GM12878 (cell line): ENCODE measurements at regions of chr11 and their contacts with region 1.

Region 1: DNA sequence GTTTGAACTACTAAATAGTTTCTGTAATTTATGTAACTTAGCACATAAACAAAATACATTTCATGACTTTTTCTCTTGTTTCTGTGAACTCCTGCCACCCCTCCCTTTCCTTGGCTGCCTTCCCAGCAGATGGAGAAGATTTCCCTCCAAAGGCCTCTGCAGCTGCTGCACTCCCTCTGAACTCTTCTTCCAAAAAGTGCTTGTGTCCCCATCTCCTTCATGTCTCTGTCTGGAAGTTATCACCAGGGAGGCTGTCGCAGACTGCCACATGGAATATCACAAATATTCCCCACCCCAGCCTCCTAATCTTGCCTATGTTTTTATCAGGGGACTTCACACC is 1068.3 kb downstream of the OPCML start:
- DNase-seq: no peak
- ATAC-seq: no peak
- H3K4me3 ChIP-seq: no peak overlapping the region
- H3K27ac ChIP-seq: no peak overlapping the region
- H3K4me1 ChIP-seq: no peaks in the 10 kb centered on the region
- H3K27me3 ChIP-seq: no peaks in the 10 kb centered on the region
- CTCF ChIP-seq: no peak
- EP300 ChIP-seq: no peak
- POLR2A ChIP-seq: no peak
- RAD21 ChIP-seq: no peak

Region 2: GRCh38 chr11:132519241-132519815 is 55.4 kb after region 1 on chr11:
- CTCF ChIA-PET with region 1: no interaction called
- POLR2A ChIA-PET with region 1: no interaction called
- RAD21 ChIA-PET with region 1: no interaction called
- SMC1A ChIA-PET with region 1: no interaction called
- in situ Hi-C with region 1: no loop called
- intact Hi-C with region 1: loop called (anchors 5 kb)
- DNase-seq: no peak
- ATAC-seq: no peak
- H3K4me3 ChIP-seq: no peak overlapping the region
- H3K27ac ChIP-seq: no peak overlapping the region
- H3K4me1 ChIP-seq: no peaks in the 10 kb centered on the region
- H3K27me3 ChIP-seq: no peaks in the 10 kb centered on the region
- CTCF ChIP-seq: no peak
- EP300 ChIP-seq: no peak
- POLR2A ChIP-seq: no peak
- RAD21 ChIP-seq: no peak